ENCODE measurements at regions of chr7 and their contacts with region 1.

Region 1: GRCh38 chr7:143380255-143380645 is 895 bp upstream of the ZYX start:
- DNase-seq: peak; percentile 83 to 85
- H3K4me3 ChIP-seq: peak overlapping the region; percentile 91 to 100 (median 99)
- H3K27ac ChIP-seq: peak overlapping the region; percentile 86 to 97 (median 97)
- H3K4me1 ChIP-seq: peaks cover 33 to 40% of the 10 kb centered on the region in 2 donors
- H3K27me3 ChIP-seq: no peaks in the 10 kb centered on the region
- CTCF ChIP-seq: peak; percentile 82 to 97 (median 89)
- POLR2A ChIP-seq: no peak

Region 2: GRCh38 chr7:143258831-143259230 is 121.4 kb before region 1 on chr7:
- intact Hi-C with region 1: no loop called
- DNase-seq: peak in 1 of 2 donors; percentile 33
- H3K4me3 ChIP-seq: no peak overlapping the region
- H3K27ac ChIP-seq: peak overlapping the region; percentile 2 to 59 (median 50)
- H3K4me1 ChIP-seq: peaks cover 0 to 4% of the 10 kb centered on the region in 2 donors
- H3K27me3 ChIP-seq: no peaks in the 10 kb centered on the region
- CTCF ChIP-seq: no peak
- POLR2A ChIP-seq: peak in 1 of 2 donors; percentile 27

Region 3: GRCh38 chr7:143287935-143288826 is 92.1 kb before region 1 on chr7 and contains the start of gene CASP2:
- intact Hi-C with region 1: loop called (anchors 10 kb)
- DNase-seq: peak; percentile 97 to 98
- H3K4me3 ChIP-seq: peak within 1 kb of the TSS; percentile 20 to 85 (median 66)
- H3K27ac ChIP-seq: peak within 1 kb of the TSS; percentile 63 to 83 (median 82)
- H3K4me1 ChIP-seq: peaks cover 9 to 44% of the 10 kb centered on the region in 2 donors
- H3K27me3 ChIP-seq: no peaks in the 10 kb centered on the region
- CTCF ChIP-seq: peak in 3 of 6 experiments; percentile 32 to 44 (median 33)
- POLR2A ChIP-seq: peak in 1 of 2 donors; percentile 85
- total RNA-seq, gene CASP2: 13.0 to 21.7 (median 17.5) TPM

Region 4: DNA sequence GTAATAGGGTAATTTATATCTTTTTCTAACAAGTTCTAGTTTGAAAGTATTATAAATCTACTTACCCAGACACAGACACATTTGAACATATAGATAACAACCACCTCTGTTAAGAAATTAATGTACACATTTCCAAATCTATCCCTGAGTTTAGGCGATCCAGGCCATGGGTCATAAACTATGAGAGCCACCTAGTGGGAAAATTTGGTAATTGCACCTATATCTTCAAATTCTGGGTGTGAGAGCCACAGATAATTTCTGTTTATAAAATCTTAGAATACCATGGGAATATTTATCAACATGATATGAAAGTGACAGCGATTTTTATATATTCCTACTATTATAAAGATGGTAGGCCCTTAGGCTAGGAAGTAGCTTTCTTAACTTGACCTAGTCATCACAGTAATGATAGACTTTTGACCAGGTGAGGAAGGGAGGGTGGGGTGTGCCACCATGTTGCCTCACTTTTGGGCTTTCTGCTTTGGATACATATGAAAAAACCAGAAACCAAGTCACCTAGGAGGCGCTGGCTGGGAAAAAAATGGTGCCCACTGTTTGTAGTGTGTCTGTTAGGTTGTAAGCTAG is 36.4 kb after region 1 on chr7:
- intact Hi-C with region 1: loop called (anchors 5 kb)
- DNase-seq: no peak
- H3K4me3 ChIP-seq: no peak overlapping the region
- H3K27ac ChIP-seq: no peak overlapping the region
- H3K4me1 ChIP-seq: no peaks in the 10 kb centered on the region
- H3K27me3 ChIP-seq: no peaks in the 10 kb centered on the region
- CTCF ChIP-seq: peak; percentile 54 to 74 (median 62)
- POLR2A ChIP-seq: no peak